Activated CD4-positive, alpha-beta T cell treated with anti-CD3 and anti-CD28 coated beads, Interleukin-2, amount 10 ng/mL, durations not matched to agents 7 days and 5 days (primary cell): ENCODE measurements at regions of chr9 and their contacts with region 1.

Region 1: GRCh38 chr9:136847827-136848392 is 1.3 kb upstream of the PHPT1 start:
- DNase-seq: peak; percentile 81
- H3K4me3 Mint-ChIP-seq: peak overlapping the region; percentile 92
- H3K27ac Mint-ChIP-seq: peak overlapping the region; percentile 67
- H3K4me1 Mint-ChIP-seq: peaks cover 21% of the 10 kb centered on the region
- H3K27me3 Mint-ChIP-seq: peaks cover 17% of the 10 kb centered on the region

Region 2: DNA sequence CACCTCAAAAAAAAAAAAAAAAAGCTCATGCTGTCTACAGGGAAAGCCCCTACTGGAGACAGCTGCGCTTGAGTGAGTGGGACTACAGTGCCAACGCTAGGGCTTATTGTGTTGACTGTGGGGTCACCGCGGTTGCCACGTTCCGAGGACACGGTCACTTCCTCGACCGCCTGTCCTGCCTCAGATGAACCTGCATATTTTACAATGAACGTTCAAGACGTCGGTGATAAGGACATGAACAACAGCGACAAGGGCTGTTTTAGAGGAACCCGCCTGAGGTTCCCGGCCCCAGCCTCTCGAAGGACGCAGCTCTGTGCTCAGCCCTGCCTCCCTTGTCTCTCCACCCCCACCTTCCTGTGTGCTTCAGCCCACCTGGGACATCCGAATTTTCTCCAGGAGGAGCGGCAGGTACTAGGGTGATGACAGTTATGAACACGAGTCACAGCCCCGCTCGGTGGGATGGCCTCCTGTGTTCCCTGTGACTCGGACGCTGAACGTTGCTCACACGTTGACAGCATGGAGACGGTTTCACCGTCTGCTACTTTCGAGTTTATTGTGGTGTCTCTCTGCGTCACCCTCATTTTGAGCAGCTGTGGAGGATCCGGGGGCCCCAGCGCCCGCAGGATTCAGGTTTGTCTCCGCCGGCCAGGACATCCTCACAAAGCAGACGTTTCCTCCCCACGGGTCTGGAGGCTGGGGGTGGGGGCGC is 146.8 kb before region 1 on chr9:
- CTCF ChIA-PET with region 1: no interaction called
- POLR2A ChIA-PET with region 1: no interaction called
- DNase-seq: peak; percentile 63
- H3K4me3 Mint-ChIP-seq: peak overlapping the region; percentile 49
- H3K27ac Mint-ChIP-seq: peak overlapping the region; percentile 77
- H3K4me1 Mint-ChIP-seq: peaks cover 20% of the 10 kb centered on the region
- H3K27me3 Mint-ChIP-seq: peaks cover 23% of the 10 kb centered on the region

Region 3: GRCh38 chr9:136807281-136808074 is 40.4 kb before region 1 on chr9 and contains the start of gene RABL6:
- CTCF ChIA-PET with region 1: interaction called, 23 read pairs
- POLR2A ChIA-PET with region 1: no interaction called
- DNase-seq: peak; percentile 75
- H3K4me3 Mint-ChIP-seq: peak within 1 kb of the TSS; percentile 84
- H3K27ac Mint-ChIP-seq: peak within 1 kb of the TSS; percentile 90
- H3K4me1 Mint-ChIP-seq: peaks cover 37% of the 10 kb centered on the region
- H3K27me3 Mint-ChIP-seq: no peaks in the 10 kb centered on the region
- total RNA-seq, gene RABL6: 95.5 to 109 TPM

Region 4: DNA sequence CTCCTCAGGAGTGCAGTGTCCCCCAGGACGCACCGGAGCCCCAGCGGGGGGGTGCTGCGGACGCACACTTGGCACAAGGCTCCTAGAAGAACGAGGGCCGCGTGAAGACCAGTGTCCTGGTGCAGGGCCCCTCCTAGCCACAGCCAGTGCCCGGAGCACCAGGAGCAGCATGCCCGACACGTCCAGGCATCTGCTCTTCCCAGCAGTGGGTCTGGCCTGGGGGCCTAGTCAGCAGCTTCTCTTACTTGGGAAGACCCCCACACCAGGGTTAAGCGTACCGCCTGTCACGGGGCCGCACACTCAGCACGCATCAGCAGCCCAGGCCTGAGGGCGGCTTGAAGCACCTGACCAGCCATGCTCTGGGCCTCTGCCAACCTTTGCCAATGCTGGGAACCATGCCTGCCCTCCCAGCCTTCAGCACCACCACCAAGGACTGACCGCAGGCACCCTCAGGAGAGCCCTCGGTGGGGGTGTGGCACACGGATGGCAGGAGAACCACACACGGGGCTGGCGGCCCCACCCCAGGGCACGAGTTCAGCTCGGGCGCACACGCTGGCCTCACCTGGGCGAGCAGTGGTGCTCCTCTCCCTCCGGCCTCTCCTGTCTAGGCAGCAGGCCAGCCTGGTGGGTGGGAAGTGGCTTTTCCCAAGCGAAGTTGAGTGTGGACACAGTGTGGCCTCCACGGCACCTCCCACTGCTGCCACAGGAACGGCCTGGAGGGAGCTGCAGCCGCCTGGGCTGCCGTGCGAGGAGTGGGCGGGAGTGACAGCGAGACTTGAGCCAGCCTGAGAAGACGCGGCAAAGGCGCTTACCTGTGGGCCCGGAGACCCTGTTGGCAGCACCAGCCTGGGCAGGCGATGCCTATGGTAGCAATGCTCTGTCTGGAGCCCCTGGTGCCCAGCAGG is 17.7 kb before region 1 on chr9:
- CTCF ChIA-PET with region 1: interaction called, 19 read pairs
- POLR2A ChIA-PET with region 1: no interaction called
- DNase-seq: no peak
- H3K4me3 Mint-ChIP-seq: no peak overlapping the region
- H3K27ac Mint-ChIP-seq: no peak overlapping the region
- H3K4me1 Mint-ChIP-seq: no peaks in the 10 kb centered on the region
- H3K27me3 Mint-ChIP-seq: no peaks in the 10 kb centered on the region

Region 5: GRCh38 chr9:136885950-136886578 is 38.2 kb after region 1 on chr9 and contains the start of gene TRAF2:
- CTCF ChIA-PET with region 1: interaction called, 16 read pairs
- POLR2A ChIA-PET with region 1: no interaction called
- DNase-seq: peak; percentile 97
- H3K4me3 Mint-ChIP-seq: peak within 1 kb of the TSS; percentile 86
- H3K27ac Mint-ChIP-seq: peak within 1 kb of the TSS; percentile 84
- H3K4me1 Mint-ChIP-seq: peaks cover 52% of the 10 kb centered on the region
- H3K27me3 Mint-ChIP-seq: no peaks in the 10 kb centered on the region
- total RNA-seq, gene TRAF2: 39.4 to 49.4 TPM

Region 6: GRCh38 chr9:137029058-137029936 is 181.4 kb after region 1 on chr9:
- CTCF ChIA-PET with region 1: interaction called, 19 read pairs
- POLR2A ChIA-PET with region 1: no interaction called
- DNase-seq: peak; percentile 70
- H3K4me3 Mint-ChIP-seq: peak overlapping the region; percentile 75
- H3K27ac Mint-ChIP-seq: peak overlapping the region; percentile 87
- H3K4me1 Mint-ChIP-seq: peaks cover 54% of the 10 kb centered on the region
- H3K27me3 Mint-ChIP-seq: no peaks in the 10 kb centered on the region